ENCODE measurements at regions of chr4 and their contacts with region 1.

Region 1: DNA sequence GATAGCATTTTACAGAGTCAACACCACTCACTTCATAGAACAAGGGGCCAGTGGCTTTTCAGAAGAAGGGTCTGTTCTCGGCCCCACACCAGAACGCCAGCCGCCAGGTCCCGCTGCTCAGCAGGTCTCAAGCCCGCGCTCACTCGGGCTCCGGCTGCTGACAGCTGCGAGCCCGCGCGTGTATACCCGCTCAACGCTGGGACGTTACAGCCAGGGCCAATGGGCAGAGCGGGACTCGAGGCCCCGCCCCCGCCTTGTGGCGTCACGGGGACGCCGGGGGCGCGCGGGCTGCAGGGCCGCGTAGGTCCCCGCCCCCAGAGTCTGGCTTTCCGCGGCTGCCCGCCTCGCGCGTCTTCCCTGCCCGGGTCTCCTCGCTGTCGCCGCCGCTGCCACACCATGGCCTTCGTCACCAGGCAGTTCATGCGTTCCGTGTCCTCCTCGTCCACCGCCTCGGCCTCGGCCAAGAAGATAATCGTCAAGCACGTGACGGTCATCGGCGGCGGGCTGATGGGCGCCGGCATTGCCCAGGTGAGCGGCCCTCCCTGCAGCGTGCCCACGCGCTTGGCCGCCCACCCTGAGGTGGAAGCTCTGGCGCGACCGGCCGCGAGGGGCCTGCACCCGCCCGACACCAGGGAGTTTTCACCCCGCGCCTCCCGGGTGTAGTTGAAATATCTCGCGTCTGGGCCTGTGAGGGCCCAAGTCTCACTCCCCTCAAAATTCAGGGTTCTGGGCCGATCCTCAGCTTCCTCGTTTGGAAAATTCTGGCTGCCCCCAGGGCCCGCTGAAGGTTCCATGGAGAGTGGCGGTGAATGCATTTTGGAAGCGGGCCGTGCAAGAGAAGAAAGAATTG is at the start of gene HADH:
- DNase-seq: peak; percentile 90 to 99 (median 95)

Region 2: DNA sequence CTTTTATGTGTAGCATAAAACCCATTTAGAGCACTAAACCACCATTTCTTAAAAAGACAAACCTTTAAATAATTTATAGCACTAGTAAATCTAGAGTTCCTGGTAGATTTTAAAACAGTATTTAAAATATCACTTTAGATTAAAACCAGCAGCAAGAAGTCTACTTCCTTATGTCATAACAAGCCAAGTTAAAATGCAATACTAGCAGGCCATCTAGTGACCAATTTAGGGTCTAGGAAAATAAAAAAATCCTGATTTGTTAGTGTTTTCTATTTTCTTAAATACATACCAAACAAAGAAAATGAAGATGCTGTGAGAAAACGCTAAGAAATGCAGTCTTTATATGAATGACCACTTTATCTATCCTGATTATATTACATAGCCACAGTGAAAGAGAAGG is 323.6 kb before region 1 on chr4:
- intact Hi-C with region 1: no loop called
- DNase-seq: no peak

Region 3: GRCh38 chr4:107930821-107931774 is 58.7 kb before region 1 on chr4 and contains the start of gene CYP2U1:
- intact Hi-C with region 1: loop called (anchors 1 kb)
- DNase-seq: peak; percentile 78 to 98 (median 86)

Region 4: DNA sequence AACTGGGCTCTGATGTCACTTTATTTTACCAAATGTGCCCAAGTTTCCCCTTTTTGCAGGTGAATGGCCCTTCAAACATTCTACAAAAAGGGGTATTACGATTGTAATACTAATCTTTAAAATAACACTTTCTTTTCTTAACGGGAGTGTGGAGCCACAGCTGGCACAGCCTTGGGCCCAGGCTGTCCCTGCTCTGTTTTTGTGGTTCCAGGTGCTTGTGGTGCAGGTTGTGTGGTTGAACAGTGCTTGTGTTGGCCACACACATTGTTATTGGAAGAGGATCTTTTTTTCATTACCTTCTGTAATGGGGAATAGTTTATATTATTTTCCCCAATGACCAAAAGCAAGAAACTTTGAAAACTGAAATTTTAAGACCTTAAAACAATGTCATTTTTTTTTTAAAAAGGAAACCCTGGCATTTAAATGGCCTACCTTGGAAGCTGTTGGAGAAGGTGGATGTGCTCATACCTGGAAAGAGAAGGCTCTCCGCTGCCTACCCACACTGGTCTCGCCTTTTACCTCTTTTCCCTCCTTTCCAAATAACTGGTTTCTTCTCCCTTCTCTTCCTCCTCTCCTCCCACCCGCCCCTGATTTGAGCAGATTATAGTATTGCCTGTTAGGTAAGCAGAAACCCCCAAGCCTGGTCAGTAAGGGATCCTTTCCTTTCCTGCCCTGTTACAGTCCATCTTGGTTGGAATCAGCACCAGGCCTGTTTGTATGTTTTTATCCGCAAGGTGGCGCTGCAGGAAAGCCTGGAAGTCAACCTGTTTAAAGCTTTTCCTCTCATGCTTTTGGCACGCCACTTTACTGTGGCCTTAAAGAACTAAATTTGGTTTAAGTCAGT is 28.5 kb after region 1 on chr4:
- intact Hi-C with region 1: loop called (anchors 2 kb)
- DNase-seq: peak; percentile 61 to 96 (median 86)

Region 5: GRCh38 chr4:108320061-108320460 is 330.3 kb after region 1 on chr4:
- intact Hi-C with region 1: no loop called
- DNase-seq: no peak